HCT116 (cell line): ENCODE measurements at regions of chr22 and their contacts with region 1.

Region 1: GRCh38 chr22:26669060-26669481 is 11.7 kb downstream of the MIAT start:
- DNase-seq: peak; percentile 62
- ATAC-seq: peak; percentile 50
- H3K4me3 ChIP-seq: no peak overlapping the region
- H3K27ac ChIP-seq: no peak overlapping the region
- H3K4me1 ChIP-seq: peaks cover 12 to 27% of the 10 kb centered on the region in 2 experiments
- H3K27me3 ChIP-seq: no peaks in the 10 kb centered on the region
- CTCF ChIP-seq: peak in 2 of 3 experiments; percentile 57 to 69; a peak in 4 of 6 replicates
- POLR2A ChIP-seq: no peak
- RAD21 ChIP-seq: no peak

Region 2: GRCh38 chr22:26364066-26365015 is 304.7 kb before region 1 on chr22:
- CTCF ChIA-PET with region 1: interaction called, 30 read pairs
- POLR2A ChIA-PET with region 1: no interaction called
- RAD21 ChIA-PET with region 1: interaction called, 3 to 5 read pairs
- intact Hi-C with region 1: no loop called
- DNase-seq: peak; percentile 79
- ATAC-seq: peak; percentile 89
- H3K4me3 ChIP-seq: no peak overlapping the region
- H3K27ac ChIP-seq: no peak overlapping the region
- H3K4me1 ChIP-seq: peaks cover 4 to 13% of the 10 kb centered on the region in 2 experiments; a peak in 3 of 4 replicates
- H3K27me3 ChIP-seq: 0 out of 2 replicates have a peak, but pooled peaks cover 3% of the 10 kb centered on the region
- CTCF ChIP-seq: peak; percentile 44 to 79 (median 73); a peak in 5 of 6 replicates
- POLR2A ChIP-seq: no peak
- RAD21 ChIP-seq: peak; percentile 68

Region 3: DNA sequence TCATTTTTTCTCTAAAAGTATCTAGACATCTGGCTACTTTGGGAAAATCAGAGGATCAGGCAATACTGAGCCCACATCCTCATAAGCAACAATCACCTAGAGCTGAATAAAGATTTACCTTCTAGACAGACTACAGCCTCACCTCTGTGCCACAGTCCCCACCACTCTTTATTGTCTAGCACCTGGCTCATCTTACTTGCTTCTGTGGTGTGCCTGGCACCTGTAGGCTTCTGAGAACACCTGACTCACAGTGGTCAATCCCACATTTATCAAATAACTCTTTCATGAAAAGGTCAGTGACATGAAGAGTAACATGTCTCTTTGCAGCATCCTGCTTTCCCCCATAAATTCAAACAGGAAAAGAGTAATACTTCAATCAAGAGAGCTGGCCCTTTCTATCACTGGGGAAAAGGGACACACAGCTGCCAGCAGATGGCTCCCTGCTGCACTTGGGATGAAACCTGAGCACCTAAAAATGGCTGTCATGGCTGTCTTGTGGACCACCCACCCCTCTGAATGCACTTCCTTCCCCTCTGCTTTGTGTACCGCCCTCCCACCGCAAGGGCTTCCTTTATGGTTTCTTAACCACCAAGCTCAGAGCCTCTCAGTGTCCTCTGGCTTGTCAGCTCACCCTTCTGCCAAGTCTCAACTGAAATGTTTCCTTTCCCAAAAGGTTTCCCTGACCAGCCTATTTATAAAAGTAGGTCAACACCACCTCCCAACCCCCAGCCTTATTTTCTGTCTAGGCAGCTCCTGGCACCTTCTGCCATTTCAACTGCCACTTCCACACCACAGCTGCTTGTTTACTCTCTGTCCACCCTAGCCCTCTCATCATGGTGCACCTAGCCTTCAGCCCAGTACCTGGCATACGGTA is 166.1 kb before region 1 on chr22:
- CTCF ChIA-PET with region 1: interaction called, 5 read pairs
- POLR2A ChIA-PET with region 1: interaction called, 3 read pairs
- RAD21 ChIA-PET with region 1: no interaction called
- intact Hi-C with region 1: loop called (anchors 5 kb)
- DNase-seq: no peak
- ATAC-seq: peak; percentile 79
- H3K4me3 ChIP-seq: no peak overlapping the region
- H3K27ac ChIP-seq: 0 out of 2 replicates have a peak overlapping the region, but pooled peaks have one; percentile 24
- H3K4me1 ChIP-seq: no peaks in the 10 kb centered on the region
- H3K27me3 ChIP-seq: no peaks in the 10 kb centered on the region
- CTCF ChIP-seq: peak; percentile 28 to 65 (median 62); a peak in 4 of 6 replicates
- POLR2A ChIP-seq: no peak
- RAD21 ChIP-seq: peak; percentile 37

Region 4: DNA sequence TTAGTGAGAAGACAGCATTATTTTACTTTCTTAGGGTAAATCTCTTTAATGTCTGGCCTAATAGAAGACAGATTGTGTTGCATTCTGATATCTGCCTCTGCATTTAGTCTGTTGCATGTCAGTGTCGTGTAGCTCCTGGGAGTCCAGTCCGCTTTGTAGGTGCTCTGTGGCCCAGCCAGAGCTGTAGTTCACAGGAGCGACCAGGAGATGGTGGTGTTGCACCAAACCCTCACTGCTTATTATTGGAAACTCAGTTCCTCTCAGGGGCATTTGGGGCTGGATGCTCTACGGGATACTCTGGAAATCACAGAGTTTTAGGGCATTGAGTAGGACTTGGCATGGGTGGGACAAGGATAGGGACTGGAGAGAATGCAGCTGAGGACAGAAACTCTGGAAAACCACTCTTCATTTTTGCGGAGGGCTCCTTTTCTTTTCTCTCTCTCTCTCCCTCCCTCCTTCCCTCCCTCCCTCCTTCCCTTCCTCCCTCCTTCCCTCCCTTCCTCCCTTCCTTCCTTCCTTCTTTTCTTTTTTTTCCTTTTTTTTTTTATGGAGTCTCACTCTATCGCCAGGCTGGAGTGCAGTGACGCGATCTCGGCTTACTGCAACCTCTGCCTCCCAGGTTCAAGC is 10.0 kb after region 1 on chr22:
- CTCF ChIA-PET with region 1: interaction called, 11 read pairs
- POLR2A ChIA-PET with region 1: no interaction called
- RAD21 ChIA-PET with region 1: no interaction called
- intact Hi-C with region 1: no loop called
- DNase-seq: peak; percentile 53
- ATAC-seq: peak; percentile 95
- H3K4me3 ChIP-seq: no peak overlapping the region
- H3K27ac ChIP-seq: no peak overlapping the region
- H3K4me1 ChIP-seq: peaks cover 5 to 7% of the 10 kb centered on the region in 2 experiments
- H3K27me3 ChIP-seq: no peaks in the 10 kb centered on the region
- CTCF ChIP-seq: peak; percentile 18 to 96 (median 89); a peak in 5 of 6 replicates
- POLR2A ChIP-seq: no peak
- RAD21 ChIP-seq: peak; percentile 57